Activated CD4-positive, alpha-beta T cell treated with anti-CD3 and anti-CD28 coated beads, Interleukin-2, amount 10 ng/mL, durations not matched to agents 24 days and 14 days (primary cell): ENCODE measurements at regions of chr17 and their contacts with region 1.

Region 1: GRCh38 chr17:2592971-2593820 is at the start of gene PAFAH1B1:
- DNase-seq: peak; percentile 99
- H3K4me3 Mint-ChIP-seq: peak within 1 kb of the TSS; percentile 90
- H3K27ac Mint-ChIP-seq: peak within 1 kb of the TSS; percentile 96
- H3K4me1 Mint-ChIP-seq: peaks cover 27% of the 10 kb centered on the region
- H3K27me3 Mint-ChIP-seq: peaks cover 3% of the 10 kb centered on the region
- total RNA-seq, gene PAFAH1B1: 166 and 170 TPM in 2 replicates

Region 2: GRCh38 chr17:1561400-1562175 is 1031.6 kb before region 1 on chr17:
- intact Hi-C with region 1: no loop called
- DNase-seq: peak; percentile 83
- H3K4me3 Mint-ChIP-seq: peak overlapping the region; percentile 91
- H3K27ac Mint-ChIP-seq: peak overlapping the region; percentile 68
- H3K4me1 Mint-ChIP-seq: peaks cover 30% of the 10 kb centered on the region
- H3K27me3 Mint-ChIP-seq: peaks cover 7% of the 10 kb centered on the region

Region 3: GRCh38 chr17:2253768-2254406 is 339.3 kb before region 1 on chr17:
- intact Hi-C with region 1: no loop called
- DNase-seq: peak; percentile 86
- H3K4me3 Mint-ChIP-seq: peak overlapping the region; percentile 77
- H3K27ac Mint-ChIP-seq: peak overlapping the region; percentile 97
- H3K4me1 Mint-ChIP-seq: peaks cover 70% of the 10 kb centered on the region
- H3K27me3 Mint-ChIP-seq: no peaks in the 10 kb centered on the region

Region 4: DNA sequence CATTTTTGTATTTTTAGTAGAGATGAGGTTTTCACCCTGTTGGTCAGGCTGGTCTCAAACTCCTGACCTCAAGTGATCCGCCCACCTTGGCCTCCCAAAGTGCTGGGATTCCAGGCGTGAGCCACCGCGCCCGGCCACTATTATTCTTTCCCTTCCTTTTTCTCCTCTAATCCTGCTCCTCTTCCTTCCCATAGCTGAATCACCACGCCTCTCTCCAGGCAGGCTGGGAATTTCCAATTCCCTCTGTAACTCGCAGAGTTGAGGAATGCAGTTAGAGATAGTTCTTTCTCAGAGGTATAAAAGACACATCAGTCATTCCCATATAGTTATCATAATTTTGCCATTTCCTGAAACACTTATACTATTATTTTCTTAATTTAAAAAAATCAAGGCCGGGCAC is 92.8 kb before region 1 on chr17:
- intact Hi-C with region 1: no loop called
- DNase-seq: no peak
- H3K4me3 Mint-ChIP-seq: no peak overlapping the region
- H3K27ac Mint-ChIP-seq: no peak overlapping the region
- H3K4me1 Mint-ChIP-seq: peaks cover 10% of the 10 kb centered on the region
- H3K27me3 Mint-ChIP-seq: no peaks in the 10 kb centered on the region

Region 5: DNA sequence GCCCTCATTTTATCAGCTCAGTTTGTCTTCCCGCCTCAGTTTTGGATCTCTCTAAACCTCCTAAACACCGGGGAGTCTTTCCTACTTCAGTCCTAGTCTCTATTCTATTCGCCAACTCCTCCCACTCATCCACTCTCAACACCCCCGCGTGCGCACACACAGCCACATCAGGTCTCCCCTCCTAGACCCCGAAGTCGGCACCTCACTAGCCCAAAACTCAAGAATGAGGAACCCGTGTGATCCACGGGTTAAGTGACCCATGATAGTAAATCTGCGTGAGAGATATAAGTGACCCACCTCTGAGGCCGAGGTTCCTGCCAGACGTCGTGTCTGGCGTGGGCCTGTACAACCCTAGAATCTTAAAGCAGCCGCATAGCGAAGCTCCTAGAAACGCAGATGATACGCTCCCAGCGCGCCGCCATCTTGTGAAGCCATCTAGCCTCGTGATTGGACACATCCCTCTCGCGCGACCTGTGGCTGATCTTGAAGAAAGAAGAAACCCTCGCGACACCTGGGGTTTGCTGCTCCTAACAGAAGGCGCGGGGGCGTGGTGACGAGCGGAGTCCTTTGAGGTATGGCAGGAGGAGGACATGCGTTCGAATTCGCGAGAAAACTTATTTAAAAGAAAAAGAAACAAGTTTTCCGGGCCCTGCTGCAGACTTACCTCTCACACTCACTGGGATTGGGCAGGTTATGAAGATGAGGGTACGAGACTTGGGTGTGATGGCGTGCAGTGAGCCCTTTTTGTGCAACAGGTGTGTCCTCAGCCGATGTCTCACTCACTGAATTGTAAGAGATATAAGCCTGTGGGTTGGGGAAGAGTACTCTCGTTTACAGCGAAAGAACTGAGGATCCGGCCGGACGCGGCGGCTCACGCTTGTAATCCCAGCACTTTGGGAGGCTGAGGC is 81.5 kb before region 1 on chr17 and contains the start of gene METTL16:
- intact Hi-C with region 1: loop called (anchors 2 kb)
- DNase-seq: peak; percentile 99
- H3K4me3 Mint-ChIP-seq: peak within 1 kb of the TSS; percentile 56
- H3K27ac Mint-ChIP-seq: no peak within 1 kb of the TSS
- H3K4me1 Mint-ChIP-seq: peaks cover 13% of the 10 kb centered on the region
- H3K27me3 Mint-ChIP-seq: peaks cover 3% of the 10 kb centered on the region
- total RNA-seq, gene METTL16: 59.5 and 61.1 TPM in 2 replicates

Region 6: GRCh38 chr17:2672026-2672425 is 78.8 kb after region 1 on chr17:
- intact Hi-C with region 1: loop called (anchors 1 kb)
- DNase-seq: no peak
- H3K4me3 Mint-ChIP-seq: no peak overlapping the region
- H3K27ac Mint-ChIP-seq: no peak overlapping the region
- H3K4me1 Mint-ChIP-seq: peaks cover 4% of the 10 kb centered on the region
- H3K27me3 Mint-ChIP-seq: no peaks in the 10 kb centered on the region

Region 7: GRCh38 chr17:2711601-2712299 is 118.6 kb after region 1 on chr17 and contains the start of gene CLUH:
- intact Hi-C with region 1: loop called (anchors 2 kb)
- DNase-seq: peak; percentile 99
- H3K4me3 Mint-ChIP-seq: peak within 1 kb of the TSS; percentile 94
- H3K27ac Mint-ChIP-seq: peak within 1 kb of the TSS; percentile 92
- H3K4me1 Mint-ChIP-seq: peaks cover 35% of the 10 kb centered on the region
- H3K27me3 Mint-ChIP-seq: no peaks in the 10 kb centered on the region
- total RNA-seq, gene CLUH: 178 and 193 TPM in 2 replicates